ENCODE measurements at regions of chr4 and their contacts with region 1.

Region 1: DNA sequence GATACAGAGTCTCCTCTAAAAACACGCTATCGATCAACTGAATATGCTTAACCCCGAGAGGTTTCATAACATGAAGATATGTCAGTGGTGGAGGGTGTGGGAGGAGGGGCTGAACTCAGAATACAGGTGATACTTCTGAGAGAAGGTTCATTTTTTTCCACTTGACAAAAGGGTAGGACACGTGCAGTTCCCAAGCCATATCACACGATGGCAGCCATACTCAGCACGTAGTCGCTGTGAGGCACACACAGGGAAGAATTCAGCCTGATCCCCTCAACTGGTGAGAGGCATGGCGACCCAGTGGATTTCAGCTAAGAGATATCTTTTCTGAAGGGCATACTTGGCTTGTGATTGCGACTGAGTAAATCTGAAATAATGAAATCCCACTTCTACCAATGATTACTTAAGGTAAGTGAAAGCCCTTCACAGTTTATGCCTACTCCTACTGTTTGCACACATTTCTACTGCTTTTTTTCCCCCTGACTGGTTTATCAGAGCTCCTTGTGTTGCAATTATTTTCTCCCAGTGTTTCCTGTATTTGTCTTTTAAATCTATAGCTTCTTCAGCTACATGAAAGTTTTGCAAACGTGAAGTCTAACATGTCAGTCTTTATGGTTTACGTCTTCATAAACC is 133.1 kb downstream of the CORIN start:
- DNase-seq: peak; percentile 58
- H3K4me3 ChIP-seq: no peak overlapping the region
- H3K27ac ChIP-seq: no peak overlapping the region
- H3K4me1 ChIP-seq: peaks cover 0 to 4% of the 10 kb centered on the region in 2 experiments; a peak in 3 of 4 replicates
- H3K27me3 ChIP-seq: no peaks in the 10 kb centered on the region
- CTCF ChIP-seq: peak; percentile 46
- EP300 ChIP-seq: no peak
- RAD21 ChIP-seq: peak; percentile 92

Region 2: DNA sequence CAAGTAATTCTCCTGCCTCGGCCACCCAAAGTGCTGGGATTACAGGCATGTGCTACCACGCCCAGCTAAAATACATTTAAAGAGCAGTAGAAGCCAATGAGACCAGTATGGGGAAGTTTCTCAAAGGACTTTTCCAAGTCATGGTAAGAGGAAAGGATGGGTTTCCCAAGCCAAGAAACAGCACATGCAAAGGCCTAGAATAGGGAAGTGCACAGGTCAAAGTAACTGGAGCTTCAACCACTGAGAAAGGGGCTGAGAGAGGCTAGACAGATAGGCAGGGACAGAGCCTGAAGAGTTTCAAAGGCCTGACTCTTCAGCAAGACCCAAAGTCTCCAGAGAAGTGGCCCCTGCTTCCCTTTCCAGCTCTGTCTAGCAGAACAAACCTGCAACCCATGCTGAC is 29.0 kb before region 1 on chr4:
- CTCF ChIA-PET with region 1: interaction called, 10 read pairs
- POLR2A ChIA-PET with region 1: no interaction called
- DNase-seq: no peak
- H3K4me3 ChIP-seq: no peak overlapping the region
- H3K27ac ChIP-seq: no peak overlapping the region
- H3K4me1 ChIP-seq: peaks cover 0 to 2% of the 10 kb centered on the region in 2 experiments; a peak in 1 of 4 replicates
- H3K27me3 ChIP-seq: no peaks in the 10 kb centered on the region
- CTCF ChIP-seq: no peak
- EP300 ChIP-seq: no peak
- RAD21 ChIP-seq: no peak

Region 3: GRCh38 chr4:47692639-47693180 is 12.1 kb before region 1 on chr4:
- CTCF ChIA-PET with region 1: interaction called, 20 read pairs
- POLR2A ChIA-PET with region 1: no interaction called
- DNase-seq: no peak
- H3K4me3 ChIP-seq: no peak overlapping the region
- H3K27ac ChIP-seq: peak overlapping the region in 1 of 2 experiments; percentile 59; a peak in 1 of 4 replicates
- H3K4me1 ChIP-seq: 0 out of 4 replicates have a peak, but pooled peaks cover 0 to 6% of the 10 kb centered on the region in 2 experiments
- H3K27me3 ChIP-seq: no peaks in the 10 kb centered on the region
- CTCF ChIP-seq: no peak
- EP300 ChIP-seq: no peak
- RAD21 ChIP-seq: no peak

Region 4: GRCh38 chr4:47729131-47729680 is 24.4 kb after region 1 on chr4:
- CTCF ChIA-PET with region 1: interaction called, 31 read pairs
- POLR2A ChIA-PET with region 1: no interaction called
- DNase-seq: no peak
- H3K4me3 ChIP-seq: no peak overlapping the region
- H3K27ac ChIP-seq: no peak overlapping the region
- H3K4me1 ChIP-seq: no peaks in the 10 kb centered on the region
- H3K27me3 ChIP-seq: no peaks in the 10 kb centered on the region
- CTCF ChIP-seq: no peak
- EP300 ChIP-seq: no peak
- RAD21 ChIP-seq: no peak

Region 5: GRCh38 chr4:47814618-47815295 is 109.9 kb after region 1 on chr4:
- CTCF ChIA-PET with region 1: interaction called, 13 read pairs
- POLR2A ChIA-PET with region 1: no interaction called
- DNase-seq: no peak
- H3K4me3 ChIP-seq: no peak overlapping the region
- H3K27ac ChIP-seq: no peak overlapping the region
- H3K4me1 ChIP-seq: no peaks in the 10 kb centered on the region
- H3K27me3 ChIP-seq: no peaks in the 10 kb centered on the region; the same call in 1 of the 2 replicates
- CTCF ChIP-seq: no peak
- EP300 ChIP-seq: no peak
- RAD21 ChIP-seq: no peak

Region 6: GRCh38 chr4:47933840-47934239 is 229.0 kb after region 1 on chr4:
- CTCF ChIA-PET with region 1: interaction called, 72 read pairs
- POLR2A ChIA-PET with region 1: no interaction called
- DNase-seq: peak; percentile 36
- H3K4me3 ChIP-seq: no peak overlapping the region; a peak in 1 of 4 replicates
- H3K27ac ChIP-seq: no peak overlapping the region
- H3K4me1 ChIP-seq: peaks cover 11 to 15% of the 10 kb centered on the region in 2 experiments
- H3K27me3 ChIP-seq: no peaks in the 10 kb centered on the region
- CTCF ChIP-seq: peak; percentile 78
- EP300 ChIP-seq: no peak
- RAD21 ChIP-seq: peak; percentile 86

Measured in SK-N-SH (cell line).